Heart left ventricle (tissue), 16 donors: ENCODE measurements at regions of chr4 and their contacts with region 1.

Region 1: GRCh38 chr4:163042306-163042705 is 124.4 kb downstream of the NAF1 start:
- DNase-seq: no peak
- ATAC-seq: no peak
- H3K4me3 ChIP-seq: no peak overlapping the region
- H3K27ac ChIP-seq: no peak overlapping the region
- H3K4me1 ChIP-seq: no peaks in the 10 kb centered on the region
- H3K27me3 ChIP-seq: no peaks in the 10 kb centered on the region
- CTCF ChIP-seq: no peak
- POLR2A ChIP-seq: no peak

Region 2: GRCh38 chr4:162497564-162498167 is 544.6 kb before region 1 on chr4:
- intact Hi-C with region 1: loop called in 8 of 10 experiments (anchors 2 to 10 kb)
- DNase-seq: no peak
- ATAC-seq: peak; percentile 73 to 84 (median 78)
- H3K4me3 ChIP-seq: peak overlapping the region in 7 of 12 donors; percentile 18 to 36 (median 23)
- H3K27ac ChIP-seq: no peak overlapping the region
- H3K4me1 ChIP-seq: peaks cover 0 to 3% (median 0%) of the 10 kb centered on the region in 12 donors
- H3K27me3 ChIP-seq: peaks cover 0 to 2% (median 0%) of the 10 kb centered on the region in 9 donors
- CTCF ChIP-seq: peak; percentile 72 to 92 (median 82)
- POLR2A ChIP-seq: no peak

Region 3: GRCh38 chr4:162506253-162506652 is 536.1 kb before region 1 on chr4:
- intact Hi-C with region 1: loop called in 2 of 10 experiments (anchors 2 to 10 kb)
- DNase-seq: no peak
- ATAC-seq: no peak
- H3K4me3 ChIP-seq: no peak overlapping the region
- H3K27ac ChIP-seq: no peak overlapping the region
- H3K4me1 ChIP-seq: no peaks in the 10 kb centered on the region
- H3K27me3 ChIP-seq: peaks cover 0 to 1% (median 0%) of the 10 kb centered on the region in 9 donors
- CTCF ChIP-seq: no peak
- POLR2A ChIP-seq: no peak

Region 4: DNA sequence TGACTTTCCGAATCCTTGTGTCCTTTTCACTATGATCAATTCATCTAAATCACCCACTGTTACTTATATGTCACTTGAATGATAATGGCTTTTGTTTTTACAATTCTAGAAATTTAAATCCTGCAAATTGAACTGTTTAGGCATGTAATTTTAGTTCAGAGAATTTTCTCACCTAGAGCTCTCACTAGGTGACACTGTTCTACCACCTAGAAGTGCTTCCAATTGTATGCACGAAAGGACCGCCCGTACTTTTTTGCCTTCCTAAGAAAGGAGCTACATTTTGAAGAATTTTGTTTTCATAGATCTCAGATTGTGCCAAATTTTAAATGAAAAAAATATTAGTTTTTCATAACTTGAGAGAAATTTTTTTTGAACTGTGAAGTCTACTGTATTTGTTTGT is 396.9 kb before region 1 on chr4:
- intact Hi-C with region 1: loop called in 8 of 10 experiments (anchors 2 to 10 kb)
- DNase-seq: no peak
- ATAC-seq: peak in 2 of 4 donors; percentile 50 to 59
- H3K4me3 ChIP-seq: no peak overlapping the region
- H3K27ac ChIP-seq: no peak overlapping the region
- H3K4me1 ChIP-seq: no peaks in the 10 kb centered on the region
- H3K27me3 ChIP-seq: no peaks in the 10 kb centered on the region
- CTCF ChIP-seq: peak in 11 of 12 donors; percentile 26 to 60 (median 49)
- POLR2A ChIP-seq: no peak

Region 5: GRCh38 chr4:163085085-163085484 is 42.8 kb after region 1 on chr4:
- intact Hi-C with region 1: no loop called
- DNase-seq: no peak
- ATAC-seq: no peak
- H3K4me3 ChIP-seq: no peak overlapping the region
- H3K27ac ChIP-seq: no peak overlapping the region
- H3K4me1 ChIP-seq: no peaks in the 10 kb centered on the region
- H3K27me3 ChIP-seq: no peaks in the 10 kb centered on the region
- CTCF ChIP-seq: no peak
- POLR2A ChIP-seq: no peak